Activated CD8-positive, alpha-beta T cell treated with anti-CD3 and anti-CD28 coated beads for 36 hours (primary cell): ENCODE measurements at regions of chr11 and their contacts with region 1.

Region 1: DNA sequence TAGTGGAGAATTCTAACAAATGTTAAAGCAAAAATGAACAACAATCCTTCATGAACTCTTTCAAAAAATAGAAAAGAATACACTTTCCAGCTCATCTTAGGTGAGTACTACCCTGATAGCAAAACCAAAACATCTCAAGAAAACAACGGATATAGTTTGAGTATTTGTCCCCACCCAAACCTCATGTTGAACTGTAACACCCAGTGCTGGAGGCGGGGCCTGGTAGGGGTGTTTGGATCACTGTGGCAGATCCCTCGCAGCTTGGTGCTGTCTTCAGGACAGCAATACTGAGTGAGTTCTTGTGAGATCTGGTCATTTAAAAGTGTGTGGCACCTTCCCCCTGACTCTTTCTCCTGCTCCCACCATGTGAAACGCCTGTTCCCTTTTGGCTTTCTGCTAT is 27.0 kb downstream of the NCAPD3 start:
- DNase-seq: no peak
- ATAC-seq: no peak
- H3K4me3 Mint-ChIP-seq: no peak overlapping the region
- H3K27ac Mint-ChIP-seq: peak overlapping the region; percentile 34
- H3K4me1 Mint-ChIP-seq: peaks cover 2% of the 10 kb centered on the region
- H3K27me3 Mint-ChIP-seq: no peaks in the 10 kb centered on the region
- CTCF ChIP-seq: no peak

Region 2: GRCh38 chr11:134207538-134208239 is 10.9 kb after region 1 on chr11:
- CTCF ChIA-PET with region 1: interaction called, 14 read pairs
- POLR2A ChIA-PET with region 1: no interaction called
- intact Hi-C with region 1: no loop called
- DNase-seq: peak; percentile 79
- ATAC-seq: peak; percentile 42
- H3K4me3 Mint-ChIP-seq: no peak overlapping the region
- H3K27ac Mint-ChIP-seq: no peak overlapping the region
- H3K4me1 Mint-ChIP-seq: peaks cover 3% of the 10 kb centered on the region
- H3K27me3 Mint-ChIP-seq: no peaks in the 10 kb centered on the region
- CTCF ChIP-seq: peak; percentile 85

Region 3: GRCh38 chr11:134393638-134394037 is 196.9 kb after region 1 on chr11:
- CTCF ChIA-PET with region 1: no interaction called
- POLR2A ChIA-PET with region 1: no interaction called
- intact Hi-C with region 1: no loop called
- DNase-seq: no peak
- ATAC-seq: no peak
- H3K4me3 Mint-ChIP-seq: no peak overlapping the region
- H3K27ac Mint-ChIP-seq: no peak overlapping the region
- H3K4me1 Mint-ChIP-seq: no peaks in the 10 kb centered on the region
- H3K27me3 Mint-ChIP-seq: peaks cover 9% of the 10 kb centered on the region
- CTCF ChIP-seq: no peak